ENCODE measurements at regions of chr13 and their contacts with region 1.

Region 1: GRCh38 chr13:45047394-45048310 is 58.3 kb downstream of the GPALPP1 start:
- DNase-seq: peak; percentile 87
- H3K4me3 ChIP-seq: peak overlapping the region; percentile 23 to 47 (median 47)
- H3K27ac ChIP-seq: peak overlapping the region in 3 of 4 donors; percentile 12 to 53 (median 43)
- H3K4me1 ChIP-seq: peaks cover 0 to 13% (median 6%) of the 10 kb centered on the region in 4 donors
- H3K27me3 ChIP-seq: no peaks in the 10 kb centered on the region
- CTCF ChIP-seq: peak; percentile 87 to 95 (median 92)
- EP300 ChIP-seq: no peak
- POLR2A ChIP-seq: no peak

Region 2: DNA sequence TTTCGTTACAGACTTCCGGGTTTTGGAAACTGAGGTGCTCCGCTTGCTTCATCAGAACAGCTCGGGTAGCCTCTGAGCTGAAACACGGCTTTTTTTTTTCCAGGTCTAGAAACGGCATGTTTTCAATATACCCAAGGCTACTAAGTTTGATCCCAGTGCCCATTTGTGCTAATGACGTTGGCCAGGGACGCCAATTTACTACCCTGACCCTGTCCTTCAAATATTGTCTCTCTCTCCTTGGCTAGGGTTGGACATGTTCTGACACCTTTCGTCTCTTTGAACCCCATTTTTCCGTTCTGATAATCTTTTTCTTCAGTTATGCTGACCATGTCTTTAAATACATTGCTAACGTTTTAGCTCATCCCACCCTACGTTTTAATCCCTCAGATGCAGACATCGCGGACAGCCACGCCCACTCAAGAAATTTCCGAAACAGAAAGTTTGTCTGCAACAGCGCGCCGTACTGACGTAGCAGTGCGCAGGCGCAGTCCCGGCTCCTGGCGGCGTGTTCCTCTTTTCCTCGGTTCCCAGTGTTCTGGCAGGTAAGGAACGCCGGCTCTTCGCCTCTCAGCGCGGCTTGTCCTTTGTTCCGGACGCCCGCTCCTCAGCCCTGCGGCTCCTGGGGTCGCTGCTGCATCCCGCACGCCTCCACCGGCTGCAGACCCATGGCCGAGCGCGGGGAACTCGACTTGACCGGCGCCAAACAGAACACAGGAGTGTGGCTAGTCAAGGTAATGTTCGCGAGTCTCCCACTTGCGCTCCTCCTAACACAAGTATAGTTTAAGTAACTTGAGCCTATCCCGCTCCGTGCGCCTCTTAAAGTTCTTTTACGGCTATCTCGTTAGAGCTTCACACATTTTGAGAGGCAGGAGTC is 72.6 kb after region 1 on chr13 and contains the start of gene GTF2F2:
- intact Hi-C with region 1: loop called (anchors 5 kb)
- DNase-seq: peak; percentile 96
- H3K4me3 ChIP-seq: peak within 1 kb of the TSS; percentile 68 to 85 (median 76)
- H3K27ac ChIP-seq: peak within 1 kb of the TSS; percentile 78 to 84 (median 82)
- H3K4me1 ChIP-seq: peaks cover 0 to 27% (median 26%) of the 10 kb centered on the region in 4 donors
- H3K27me3 ChIP-seq: no peaks in the 10 kb centered on the region
- CTCF ChIP-seq: peak in 1 of 4 experiments; percentile 7
- EP300 ChIP-seq: peak in 2 of 4 donors; percentile 38 to 53
- POLR2A ChIP-seq: peak; percentile 21 to 29
- total RNA-seq, gene GTF2F2: 28.5 to 32.7 (median 30.1) TPM

Region 3: GRCh38 chr13:45500492-45501174 is 453.0 kb after region 1 on chr13:
- intact Hi-C with region 1: no loop called
- DNase-seq: no peak
- H3K4me3 ChIP-seq: no peak overlapping the region
- H3K27ac ChIP-seq: no peak overlapping the region
- H3K4me1 ChIP-seq: no peaks in the 10 kb centered on the region
- H3K27me3 ChIP-seq: no peaks in the 10 kb centered on the region
- CTCF ChIP-seq: no peak
- EP300 ChIP-seq: no peak
- POLR2A ChIP-seq: no peak

Region 4: GRCh38 chr13:46341112-46341711 is 1293.6 kb after region 1 on chr13:
- intact Hi-C with region 1: no loop called
- DNase-seq: no peak
- H3K4me3 ChIP-seq: no peak overlapping the region
- H3K27ac ChIP-seq: no peak overlapping the region
- H3K4me1 ChIP-seq: no peaks in the 10 kb centered on the region
- H3K27me3 ChIP-seq: no peaks in the 10 kb centered on the region
- CTCF ChIP-seq: no peak
- EP300 ChIP-seq: no peak
- POLR2A ChIP-seq: no peak

Measured in sigmoid colon (tissue), 7 donors.